ENCODE measurements at regions of chr19 and their contacts with region 1.

Region 1: DNA sequence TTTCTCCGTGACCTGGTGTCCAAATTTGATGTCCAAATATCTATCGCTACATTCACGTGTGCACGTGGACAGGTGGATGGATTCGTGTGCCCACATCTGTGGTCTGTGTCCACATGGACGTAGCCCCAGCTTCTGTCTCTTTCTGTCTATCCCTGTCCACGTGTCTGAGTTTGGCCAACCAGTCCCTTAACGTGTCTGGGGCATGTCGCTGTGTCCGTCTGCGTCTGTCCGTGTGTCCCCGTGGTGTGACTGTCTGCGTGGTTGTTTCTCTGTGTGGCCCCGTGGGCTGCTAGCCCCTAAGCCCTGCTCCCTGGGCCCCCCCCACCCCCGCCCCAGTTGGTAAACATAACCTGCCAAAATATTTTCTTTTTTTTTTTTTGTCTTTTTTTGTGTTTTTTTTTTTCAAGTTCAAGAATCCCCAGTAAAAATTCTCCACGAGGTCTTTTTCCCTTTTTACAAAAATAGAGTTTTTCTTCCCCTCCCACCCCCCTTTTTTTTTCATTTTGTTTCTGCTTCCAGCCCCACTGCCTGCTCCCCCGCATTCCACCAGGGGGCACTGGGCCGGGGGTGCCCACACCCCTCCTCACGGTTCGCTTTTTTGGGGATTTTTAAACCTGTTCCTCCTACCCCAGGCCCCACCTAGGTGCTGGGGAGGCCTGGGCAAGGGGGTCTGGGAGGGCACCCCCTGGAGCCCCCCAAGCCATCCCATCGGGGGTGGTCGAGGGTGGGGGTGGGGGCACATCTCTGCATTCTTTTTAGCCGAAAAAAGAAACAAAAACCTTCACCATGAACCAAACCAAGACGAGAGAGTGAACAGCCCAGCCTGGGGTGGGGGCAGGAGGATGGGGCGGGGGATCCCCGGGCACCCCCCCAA is 18.3 kb downstream of the PRKCSH start:
- DNase-seq: no peak
- ATAC-seq: no peak
- H3K4me3 ChIP-seq: no peak overlapping the region
- H3K27ac ChIP-seq: no peak overlapping the region
- H3K4me1 ChIP-seq: no peaks in the 10 kb centered on the region
- H3K27me3 ChIP-seq: no peaks in the 10 kb centered on the region
- CTCF ChIP-seq: peak in 3 of 7 experiments; percentile 11 to 25 (median 23)
- POLR2A ChIP-seq: no peak

Region 2: DNA sequence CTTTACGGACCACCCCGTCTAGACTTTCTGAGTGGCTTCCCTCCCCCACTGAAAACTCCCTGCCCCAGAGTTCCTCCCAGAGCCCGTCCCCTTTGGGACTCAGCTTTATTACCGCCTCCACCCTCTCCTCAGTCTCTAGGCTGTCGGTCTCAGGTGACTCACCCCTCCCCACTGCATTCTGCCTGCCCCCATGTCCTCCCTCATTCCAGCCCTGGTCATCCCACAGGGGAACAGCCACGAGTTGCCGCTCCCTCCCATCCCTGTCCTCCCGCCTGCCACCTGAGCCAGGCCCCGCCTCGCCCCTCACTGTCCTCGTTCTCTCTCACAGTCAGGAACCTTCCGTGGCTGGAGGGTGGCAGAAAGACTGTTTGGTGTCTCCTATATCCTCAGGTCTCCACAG is 435.5 kb before region 1 on chr19:
- intact Hi-C with region 1: loop called (anchors 10 kb)
- DNase-seq: no peak
- ATAC-seq: no peak
- H3K4me3 ChIP-seq: no peak overlapping the region
- H3K27ac ChIP-seq: no peak overlapping the region
- H3K4me1 ChIP-seq: peaks cover 5% of the 10 kb centered on the region
- H3K27me3 ChIP-seq: no peaks in the 10 kb centered on the region
- CTCF ChIP-seq: no peak
- POLR2A ChIP-seq: no peak

Measured in body of pancreas (tissue), 4 donors.